ENCODE measurements at regions of chr20 and their contacts with region 1.

Region 1: DNA sequence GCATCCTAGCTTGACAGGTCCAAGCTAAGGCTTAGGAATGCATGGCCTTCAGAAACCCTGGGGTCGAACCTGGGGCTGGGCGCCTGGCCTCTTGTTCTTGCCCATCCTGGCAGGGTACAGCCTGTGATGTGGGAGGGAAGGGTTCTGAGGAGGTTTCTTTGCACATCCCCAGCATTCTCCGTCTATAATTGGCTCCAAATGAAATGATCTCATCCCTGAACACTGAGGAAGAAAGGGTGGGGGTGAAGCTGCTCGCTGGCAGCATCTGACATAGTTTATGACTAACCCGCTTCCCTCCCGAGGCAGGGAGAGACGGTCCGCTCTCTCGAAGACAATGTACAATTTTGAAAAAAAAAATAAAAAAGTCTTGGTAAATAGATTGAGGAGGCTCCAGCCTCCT is 67.1 kb upstream of the ZNFX1 start:
- DNase-seq: peak; percentile 99
- H3K4me3 ChIP-seq: peak overlapping the region; percentile 67
- H3K27ac ChIP-seq: peak overlapping the region; percentile 94
- H3K4me1 ChIP-seq: peaks cover 30% of the 10 kb centered on the region
- H3K27me3 ChIP-seq: no peaks in the 10 kb centered on the region

Region 2: DNA sequence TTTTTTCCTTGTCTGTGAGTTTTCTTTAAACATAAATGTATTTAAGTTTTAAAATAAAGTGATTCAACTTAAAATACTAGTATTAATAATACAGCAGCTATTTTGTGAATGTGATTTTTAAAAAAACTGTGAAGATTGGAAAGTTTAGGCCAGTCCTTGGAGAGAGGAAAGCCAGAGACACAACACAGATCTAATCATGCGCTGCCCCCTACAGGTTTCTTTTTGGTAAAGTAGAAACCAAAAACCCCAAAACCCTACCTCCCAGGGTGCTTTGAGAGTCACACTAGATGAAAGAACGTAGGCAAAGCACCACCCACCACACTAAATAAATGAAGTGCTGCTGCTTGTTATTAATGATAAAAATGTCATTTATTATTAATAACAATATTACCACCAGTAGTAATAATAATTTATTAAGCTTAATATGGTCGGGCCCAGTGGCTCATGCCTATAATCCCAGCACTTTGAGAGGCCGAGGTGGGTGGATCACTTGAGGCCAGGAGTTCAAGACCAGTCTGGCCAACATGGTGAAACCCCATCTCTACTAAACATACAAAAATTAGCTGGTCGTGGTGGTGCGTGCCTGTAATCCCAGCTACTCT is 501.3 kb after region 1 on chr20:
- in situ Hi-C with region 1: loop called (anchors 25 kb)
- DNase-seq: peak; percentile 80
- H3K4me3 ChIP-seq: no peak overlapping the region
- H3K27ac ChIP-seq: no peak overlapping the region
- H3K4me1 ChIP-seq: no peaks in the 10 kb centered on the region
- H3K27me3 ChIP-seq: no peaks in the 10 kb centered on the region

Measured in GM23248 (cell line).